K562 (cell line): ENCODE measurements at regions of chr2 and their contacts with region 1.

Region 1: GRCh38 chr2:38740851-38741731 is 10.1 kb downstream of the SRSF7 start:
- DNase-seq: peak in 3 of 4 experiments; percentile 23 to 38 (median 37)
- ATAC-seq: peak; percentile 18; the same call in 2 of the 3 replicates
- H3K4me3 ChIP-seq: no peak overlapping the region
- H3K27ac ChIP-seq: no peak overlapping the region
- H3K4me1 ChIP-seq: no peaks in the 10 kb centered on the region
- H3K27me3 ChIP-seq: no peaks in the 10 kb centered on the region
- CTCF ChIP-seq: peak; percentile 40 to 73 (median 40); a peak in 4 of 6 replicates
- EP300 ChIP-seq: no peak
- POLR2A ChIP-seq: no peak
- RAD21 ChIP-seq: peak; percentile 61 to 65

Region 2: GRCh38 chr2:38315707-38316333 is 425.3 kb before region 1 on chr2:
- CTCF ChIA-PET with region 1: no interaction called
- POLR2A ChIA-PET with region 1: interaction called, 4 read pairs
- in situ Hi-C with region 1: loop called (anchors 10 kb)
- intact Hi-C with region 1: loop called (anchors 5 kb)
- DNase-seq: peak; percentile 31 to 58 (median 38)
- ATAC-seq: peak; percentile 89
- H3K4me3 ChIP-seq: no peak overlapping the region
- H3K27ac ChIP-seq: no peak overlapping the region
- H3K4me1 ChIP-seq: no peaks in the 10 kb centered on the region
- H3K27me3 ChIP-seq: no peaks in the 10 kb centered on the region
- CTCF ChIP-seq: peak; percentile 49 to 82 (median 62); a peak in 5 of 6 replicates
- EP300 ChIP-seq: no peak
- POLR2A ChIP-seq: no peak
- RAD21 ChIP-seq: peak; percentile 88 to 91

Region 3: DNA sequence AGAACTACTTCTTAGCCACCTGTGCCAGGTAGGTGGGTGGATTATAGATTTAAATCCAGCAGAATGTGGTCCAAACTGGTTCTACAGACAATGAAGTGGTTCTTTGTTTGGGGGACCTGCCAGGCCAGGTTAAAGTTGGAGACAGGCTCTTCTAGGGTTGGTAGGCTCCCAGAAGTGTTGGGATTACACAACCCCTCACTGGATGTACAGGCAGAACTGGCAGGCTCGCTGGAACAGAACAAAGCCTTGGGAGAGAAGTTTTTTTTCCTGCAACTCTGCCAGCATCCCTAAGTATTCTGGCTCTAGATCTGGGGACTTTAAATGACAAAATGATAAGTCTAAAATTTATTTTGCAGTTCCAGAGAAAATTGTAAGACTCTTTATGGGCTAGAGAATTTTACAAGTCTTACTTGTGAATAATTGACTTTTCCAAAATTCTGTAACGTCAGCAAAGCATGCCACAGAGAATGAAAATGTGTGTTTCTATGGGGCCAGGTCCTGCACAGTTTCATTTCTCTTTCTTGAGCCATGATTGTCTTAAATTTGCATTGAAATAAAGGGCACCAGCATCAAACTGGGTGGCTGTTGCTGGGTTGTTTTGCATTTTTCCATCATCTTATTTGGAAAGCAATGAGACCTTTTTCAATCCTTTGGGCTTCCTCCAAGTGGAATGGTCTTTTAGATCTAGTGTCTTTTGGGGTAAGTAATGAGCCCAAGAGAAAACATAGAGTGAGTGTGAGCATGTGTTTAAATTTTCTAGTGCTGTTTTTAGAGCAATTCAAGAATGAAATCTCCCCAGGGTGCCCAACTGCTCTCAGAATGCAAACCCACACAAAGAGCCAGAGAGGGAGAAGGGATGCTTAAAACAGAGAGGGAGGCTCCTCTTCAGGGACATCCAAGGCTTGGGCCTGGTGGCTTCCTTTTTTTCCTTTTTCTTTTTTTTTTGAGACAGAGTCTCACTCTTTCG is 331.7 kb before region 1 on chr2:
- CTCF ChIA-PET with region 1: no interaction called
- POLR2A ChIA-PET with region 1: no interaction called
- in situ Hi-C with region 1: no loop called
- intact Hi-C with region 1: no loop called
- DNase-seq: no peak
- ATAC-seq: no peak
- H3K4me3 ChIP-seq: no peak overlapping the region
- H3K27ac ChIP-seq: no peak overlapping the region
- H3K4me1 ChIP-seq: peaks cover 0 to 5% of the 10 kb centered on the region in 2 experiments; a peak in 3 of 5 replicates
- H3K27me3 ChIP-seq: no peaks in the 10 kb centered on the region
- CTCF ChIP-seq: no peak
- EP300 ChIP-seq: no peak
- POLR2A ChIP-seq: no peak
- RAD21 ChIP-seq: no peak

Region 4: DNA sequence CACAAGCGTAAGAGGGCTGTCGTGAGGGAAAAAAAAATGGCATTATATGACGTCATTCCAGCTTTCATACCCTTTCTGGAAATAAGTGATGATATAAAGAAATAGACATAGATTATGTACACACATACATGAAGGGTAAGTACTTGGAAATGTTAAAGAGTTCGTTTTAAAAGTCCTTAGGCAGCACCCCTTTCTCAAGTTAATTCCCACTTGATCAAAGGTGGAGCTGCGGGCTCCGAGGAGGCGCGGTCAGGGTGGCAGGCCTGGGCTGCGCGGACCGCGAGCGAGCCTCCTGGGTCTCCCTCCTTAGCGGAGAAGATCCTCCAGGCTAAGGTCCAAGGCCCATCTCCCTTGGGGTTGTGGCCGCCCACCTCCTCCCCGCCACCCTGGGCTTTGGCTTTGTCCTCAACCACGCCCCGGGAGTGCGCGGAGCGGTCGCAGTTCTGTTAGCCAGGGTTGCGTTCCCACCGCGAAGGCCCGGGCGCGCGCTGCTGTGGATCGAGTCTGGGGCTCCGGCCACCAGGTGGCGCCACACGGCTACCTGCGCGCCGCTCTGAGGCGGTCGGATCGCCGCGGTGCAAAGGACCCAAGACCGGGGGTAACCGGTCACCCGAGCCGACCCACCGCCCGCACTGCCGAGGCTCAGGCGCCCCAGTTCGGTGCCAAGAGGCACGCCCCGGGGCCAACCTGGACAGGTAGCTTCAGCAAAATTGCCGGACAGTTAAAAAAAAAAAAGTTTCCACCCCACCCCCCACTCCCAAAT is 205.2 kb before region 1 on chr2:
- CTCF ChIA-PET with region 1: interaction called, 5 read pairs
- POLR2A ChIA-PET with region 1: interaction called, 5 read pairs
- in situ Hi-C with region 1: no loop called
- intact Hi-C with region 1: loop called (anchors 2 kb)
- DNase-seq: peak; percentile 83 to 87 (median 85)
- ATAC-seq: peak; percentile 98
- H3K4me3 ChIP-seq: peak overlapping the region; percentile 53
- H3K27ac ChIP-seq: no peak overlapping the region; the same call in 2 of the 3 replicates
- H3K4me1 ChIP-seq: peaks cover 7 to 16% of the 10 kb centered on the region in 2 experiments; a peak in 3 of 5 replicates
- H3K27me3 ChIP-seq: peaks cover 19 to 40% of the 10 kb centered on the region in 2 experiments; a peak in 3 of 5 replicates
- CTCF ChIP-seq: peak; percentile 77 to 93 (median 87)
- EP300 ChIP-seq: no peak
- POLR2A ChIP-seq: no peak
- RAD21 ChIP-seq: peak; percentile 84 to 92

Region 5: GRCh38 chr2:38634684-38635083 is 106.4 kb before region 1 on chr2:
- CTCF ChIA-PET with region 1: no interaction called
- POLR2A ChIA-PET with region 1: no interaction called
- in situ Hi-C with region 1: no loop called
- intact Hi-C with region 1: no loop called
- DNase-seq: peak in 1 of 4 experiments; percentile 47
- ATAC-seq: peak; percentile 71
- H3K4me3 ChIP-seq: no peak overlapping the region
- H3K27ac ChIP-seq: no peak overlapping the region
- H3K4me1 ChIP-seq: peaks cover 0 to 5% of the 10 kb centered on the region in 2 experiments; a peak in 2 of 5 replicates
- H3K27me3 ChIP-seq: no peaks in the 10 kb centered on the region
- CTCF ChIP-seq: no peak
- EP300 ChIP-seq: peak; percentile 75
- POLR2A ChIP-seq: no peak
- RAD21 ChIP-seq: no peak

Region 6: DNA sequence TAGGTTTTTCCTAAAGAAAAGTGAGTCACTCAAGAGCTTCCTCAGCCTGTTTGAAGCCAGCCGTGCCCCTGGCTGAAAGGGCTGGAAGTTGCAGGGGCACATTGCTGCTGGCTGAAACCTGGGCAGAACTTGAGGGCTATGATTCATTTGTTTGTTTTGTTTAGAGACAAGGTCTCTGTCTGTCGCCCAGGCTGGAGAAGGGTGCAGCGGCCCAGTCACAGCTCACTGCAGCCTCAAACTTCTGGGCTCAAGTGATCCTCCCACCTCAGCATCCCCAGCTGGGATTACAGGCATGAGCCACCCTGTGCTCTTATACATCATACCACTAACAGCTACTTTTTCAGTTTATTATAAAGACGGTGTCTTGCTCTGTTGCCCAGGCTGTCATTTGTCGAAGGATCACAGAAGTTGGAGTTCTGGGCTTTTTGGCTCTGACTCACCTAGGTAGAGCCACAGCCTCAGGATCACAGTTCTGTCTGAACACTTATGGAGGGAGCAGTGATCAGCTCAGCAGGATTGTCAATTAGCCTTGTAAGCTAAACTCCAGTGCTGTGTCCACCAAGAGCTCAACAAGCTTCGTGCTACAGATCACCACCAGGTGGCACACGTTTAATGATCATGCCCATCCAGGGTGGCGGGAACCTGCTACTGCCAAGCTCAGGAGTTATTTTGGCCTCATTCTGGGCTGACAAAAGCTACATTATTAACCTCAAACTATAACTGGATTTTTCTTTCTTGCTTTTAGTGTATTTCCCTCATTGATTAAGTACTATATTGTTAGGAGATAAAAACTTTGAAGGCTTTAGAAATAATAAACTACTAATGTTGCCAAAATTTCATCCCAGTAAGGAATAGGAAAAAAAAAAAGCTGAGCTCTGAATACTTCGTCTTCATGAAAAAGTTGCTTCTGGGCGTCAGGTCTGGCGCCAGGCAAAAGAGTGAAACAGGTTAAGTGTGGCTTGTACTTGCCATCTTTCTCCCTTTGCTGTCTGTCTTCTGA is 206.4 kb after region 1 on chr2:
- CTCF ChIA-PET with region 1: no interaction called
- POLR2A ChIA-PET with region 1: no interaction called
- in situ Hi-C with region 1: no loop called
- intact Hi-C with region 1: no loop called
- DNase-seq: peak; percentile 40 to 73 (median 58)
- ATAC-seq: peak; percentile 86
- H3K4me3 ChIP-seq: no peak overlapping the region
- H3K27ac ChIP-seq: no peak overlapping the region
- H3K4me1 ChIP-seq: peaks cover 3 to 10% of the 10 kb centered on the region in 2 experiments; a peak in 3 of 5 replicates
- H3K27me3 ChIP-seq: no peaks in the 10 kb centered on the region
- CTCF ChIP-seq: peak; percentile 62 to 67 (median 65)
- EP300 ChIP-seq: no peak
- POLR2A ChIP-seq: no peak
- RAD21 ChIP-seq: peak; percentile 41 to 76

Region 7: DNA sequence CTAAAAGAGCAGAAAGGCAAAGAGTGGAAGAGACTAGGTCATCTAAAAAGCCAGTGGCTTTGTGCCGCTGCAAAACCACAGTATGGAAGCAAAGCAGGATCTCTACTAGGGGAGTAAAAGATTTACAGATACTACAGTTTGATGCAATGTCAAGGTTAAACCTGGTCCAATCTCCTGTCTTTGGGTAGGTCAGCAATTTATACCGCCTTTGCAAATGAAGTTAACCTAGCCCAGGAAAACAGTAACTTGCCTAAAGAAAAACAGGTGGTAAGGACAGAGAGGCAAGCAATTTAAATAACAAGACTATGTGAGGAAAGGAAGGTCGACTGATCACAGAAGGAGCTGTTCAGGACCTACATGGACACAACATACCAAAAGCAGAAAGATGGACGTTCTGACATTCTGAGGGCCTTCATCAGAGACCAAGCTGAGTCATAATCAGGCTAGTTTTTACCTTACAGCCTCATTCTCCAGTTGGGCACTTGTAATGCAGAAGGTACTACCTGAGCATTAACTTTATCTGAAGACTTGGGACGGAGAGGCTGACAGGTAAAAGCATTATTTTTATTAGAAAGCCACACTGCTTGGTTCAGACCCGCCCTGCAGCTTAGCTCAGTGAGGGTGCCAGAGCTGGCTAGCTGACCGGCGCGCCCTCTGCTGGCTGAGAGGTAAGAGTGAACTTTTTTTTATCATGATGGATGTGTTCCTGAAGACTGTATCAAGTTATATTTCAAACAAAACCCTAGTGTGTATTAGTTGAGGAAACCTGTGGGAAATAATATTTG is 486.7 kb after region 1 on chr2:
- CTCF ChIA-PET with region 1: no interaction called
- POLR2A ChIA-PET with region 1: no interaction called
- in situ Hi-C with region 1: no loop called
- intact Hi-C with region 1: loop called (anchors 10 kb)
- DNase-seq: peak; percentile 72 to 86 (median 76)
- ATAC-seq: peak; percentile 87
- H3K4me3 ChIP-seq: no peak overlapping the region
- H3K27ac ChIP-seq: peak overlapping the region; percentile 0; the same call in 1 of the 3 replicates
- H3K4me1 ChIP-seq: peaks cover 4 to 10% of the 10 kb centered on the region in 2 experiments; a peak in 3 of 5 replicates
- H3K27me3 ChIP-seq: no peaks in the 10 kb centered on the region
- CTCF ChIP-seq: peak; percentile 89 to 92 (median 91)
- EP300 ChIP-seq: no peak; the same call in 1 of the 2 replicates
- POLR2A ChIP-seq: no peak
- RAD21 ChIP-seq: peak; percentile 93 to 95